Esophagus muscularis mucosa (tissue), 4 donors: ENCODE measurements at regions of chr7 and their contacts with region 1.

Region 1: DNA sequence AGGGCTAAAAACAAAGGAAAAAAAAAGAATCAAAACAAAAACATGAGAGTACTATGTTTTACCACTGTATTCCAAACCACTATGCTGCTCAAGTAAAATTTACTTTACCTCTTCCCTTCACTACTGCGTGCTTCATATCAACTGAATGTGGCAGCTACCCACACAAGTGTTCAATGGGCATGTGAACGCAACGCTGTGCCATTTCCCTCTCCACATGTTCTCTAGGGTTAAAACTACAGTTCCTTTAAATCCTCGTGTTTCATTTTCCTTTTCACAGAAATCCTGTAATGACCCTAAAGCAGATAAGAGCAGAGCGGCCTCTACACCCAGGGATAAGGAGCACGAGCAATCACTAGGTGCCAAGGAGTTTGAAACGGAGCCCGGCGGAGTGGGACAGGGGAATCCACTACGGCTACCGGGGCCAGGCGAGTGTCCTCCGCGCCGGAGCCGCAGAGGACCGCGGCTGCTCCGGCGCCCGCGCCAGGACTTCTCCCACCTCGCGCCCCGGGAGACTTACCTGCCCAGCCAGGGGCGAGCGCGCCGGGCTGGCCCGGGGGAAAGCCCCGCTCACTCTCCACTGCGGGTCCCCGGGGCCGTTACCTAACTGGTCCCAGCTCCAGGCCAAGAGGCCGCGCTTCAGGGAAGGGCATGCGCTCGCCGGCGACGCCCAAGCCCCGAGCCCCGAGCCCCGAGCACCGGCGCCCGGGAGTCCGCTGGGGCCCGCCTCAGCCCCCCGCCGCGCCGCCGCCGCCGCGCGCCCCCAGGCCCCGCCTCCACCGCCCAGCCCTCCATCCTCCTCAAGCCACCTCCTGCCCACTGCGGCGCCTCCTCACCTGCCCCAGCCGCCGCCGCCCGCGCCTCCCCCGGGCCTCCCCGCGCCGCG is 711 bp downstream of the NAMPT start:
- DNase-seq: no peak
- H3K4me3 ChIP-seq: peak overlapping the region; percentile 78 to 87 (median 84)
- H3K27ac ChIP-seq: peak overlapping the region; percentile 95 to 99 (median 99)
- H3K4me1 ChIP-seq: peaks cover 4 to 53% (median 43%) of the 10 kb centered on the region in 4 donors
- H3K27me3 ChIP-seq: no peaks in the 10 kb centered on the region
- CTCF ChIP-seq: no peak
- EP300 ChIP-seq: no peak
- POLR2A ChIP-seq: no peak

Region 2: DNA sequence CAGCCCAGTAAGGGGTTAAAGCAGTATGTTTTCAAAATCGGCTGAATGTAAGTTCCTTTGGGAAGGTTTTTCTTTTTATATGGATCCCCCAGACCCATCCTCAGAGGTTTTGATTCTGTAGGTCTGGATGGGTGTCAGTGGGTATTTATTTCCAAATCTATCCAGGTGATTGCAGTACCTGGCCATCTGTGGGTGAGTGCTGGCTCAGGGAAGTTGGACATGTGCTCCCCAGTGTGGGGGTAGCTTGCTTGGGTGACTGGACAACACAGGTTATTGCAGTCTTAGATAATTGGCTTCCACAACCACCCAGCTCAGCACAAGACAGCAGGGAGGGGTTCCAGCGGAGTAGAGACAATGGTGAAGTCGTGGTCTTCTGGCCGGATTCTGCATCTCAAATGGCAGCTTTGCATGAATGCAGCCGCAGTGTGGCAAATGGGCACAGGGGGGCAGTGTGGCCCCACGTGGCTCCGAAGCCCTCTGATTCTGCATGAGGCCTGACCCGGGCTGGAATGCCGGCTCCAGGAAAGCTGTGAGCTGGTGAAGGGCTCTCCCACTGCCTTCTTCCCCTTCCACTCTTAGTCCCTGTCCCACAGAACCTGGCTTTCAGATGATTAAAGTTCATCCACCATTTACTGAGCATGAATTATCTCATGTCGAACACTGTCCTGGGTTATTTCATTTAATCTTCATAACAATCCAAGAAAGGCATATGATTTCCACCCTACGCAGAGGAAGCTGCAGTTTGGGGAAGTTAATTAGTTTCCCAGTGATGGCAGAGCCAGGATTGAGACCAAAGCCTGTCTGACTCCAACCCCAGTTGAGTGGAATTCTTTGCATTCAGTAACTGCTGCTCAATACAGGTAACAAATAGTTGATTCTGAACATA is 107.4 kb before region 1 on chr7:
- intact Hi-C with region 1: loop called (anchors 5 kb)
- DNase-seq: peak; percentile 96
- H3K4me3 ChIP-seq: no peak overlapping the region
- H3K27ac ChIP-seq: peak overlapping the region in 1 of 4 donors; percentile 15
- H3K4me1 ChIP-seq: peaks cover 13 to 36% (median 16%) of the 10 kb centered on the region in 4 donors
- H3K27me3 ChIP-seq: no peaks in the 10 kb centered on the region
- CTCF ChIP-seq: peak; percentile 96 to 98 (median 97)
- EP300 ChIP-seq: no peak
- POLR2A ChIP-seq: no peak

Region 3: GRCh38 chr7:106461993-106462859 is 178.2 kb after region 1 on chr7:
- intact Hi-C with region 1: loop called (anchors 5 kb)
- DNase-seq: no peak
- H3K4me3 ChIP-seq: no peak overlapping the region
- H3K27ac ChIP-seq: no peak overlapping the region
- H3K4me1 ChIP-seq: peaks cover 10 to 43% (median 41%) of the 10 kb centered on the region in 4 donors
- H3K27me3 ChIP-seq: no peaks in the 10 kb centered on the region
- CTCF ChIP-seq: peak; percentile 53 to 74 (median 71)
- EP300 ChIP-seq: no peak
- POLR2A ChIP-seq: no peak

Region 4: DNA sequence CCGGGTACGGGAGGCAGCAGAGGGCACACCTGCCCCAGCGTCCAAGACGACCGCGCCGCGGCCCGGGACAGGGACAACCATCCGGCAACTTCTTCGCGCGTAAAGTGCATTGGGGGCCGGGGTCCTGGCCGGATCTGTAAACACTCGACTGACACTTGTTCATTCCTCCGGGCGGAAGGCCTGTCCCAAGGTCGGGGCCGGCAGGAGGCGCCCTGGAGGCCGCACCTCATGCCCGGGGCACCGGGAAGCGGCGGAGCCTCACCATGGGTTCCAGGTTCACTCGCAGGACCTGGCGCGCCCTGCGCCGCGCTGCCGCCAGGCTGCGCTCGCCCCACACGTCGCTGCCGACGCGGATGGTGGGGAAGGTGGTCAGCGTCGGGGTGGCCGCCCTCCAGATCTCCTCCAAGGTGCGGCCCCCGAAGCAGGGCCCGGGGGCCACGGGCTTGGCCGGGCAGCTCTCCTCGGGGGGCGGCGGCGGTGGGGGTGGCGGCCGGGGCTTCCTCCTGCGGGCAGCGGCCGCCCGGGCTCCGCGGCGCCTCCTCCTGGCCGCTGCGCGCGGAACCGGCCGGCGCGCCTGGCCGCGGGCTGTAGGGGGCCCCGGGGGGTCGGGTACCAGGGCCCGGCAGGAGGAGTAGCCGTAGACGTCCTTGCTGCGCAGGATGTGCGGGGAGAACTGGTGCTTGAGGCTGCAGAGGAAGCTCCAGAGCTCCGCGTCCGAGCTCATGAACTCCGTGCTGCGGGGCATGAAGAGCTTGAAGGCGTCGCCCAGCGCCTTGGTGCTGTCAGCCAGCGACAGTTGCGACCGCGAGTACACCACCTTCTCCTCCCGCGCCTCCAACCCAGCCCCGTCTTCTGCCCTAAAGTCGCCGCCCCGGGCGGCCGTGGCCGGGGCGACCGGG is 376.1 kb after region 1 on chr7:
- intact Hi-C with region 1: loop called (anchors 5 kb)
- DNase-seq: no peak
- H3K4me3 ChIP-seq: peak overlapping the region; percentile 65 to 94 (median 88)
- H3K27ac ChIP-seq: peak overlapping the region; percentile 96 to 99 (median 96)
- H3K4me1 ChIP-seq: peaks cover 14 to 32% (median 27%) of the 10 kb centered on the region in 4 donors
- H3K27me3 ChIP-seq: no peaks in the 10 kb centered on the region
- CTCF ChIP-seq: peak; percentile 46 to 90 (median 68)
- EP300 ChIP-seq: no peak
- POLR2A ChIP-seq: no peak